Naive thymus-derived CD4-positive, alpha-beta T cell (primary cell): ENCODE measurements at regions of chr7 and their contacts with region 1.

Region 1: GRCh38 chr7:106009403-106010226 is 46.6 kb downstream of the CDHR3 start:
- DNase-seq: peak; percentile 73 to 85 (median 81)
- ATAC-seq: peak; percentile 99
- H3K4me3 ChIP-seq: no peak overlapping the region
- H3K4me3 Mint-ChIP-seq: peak overlapping the region in 9 of 10 donors; percentile 36 to 69 (median 55)
- H3K27ac ChIP-seq: no peak overlapping the region
- H3K27ac Mint-ChIP-seq: peak overlapping the region in 7 of 9 donors; percentile 38 to 93 (median 86)
- H3K4me1 ChIP-seq: peaks cover 0 to 30% of the 10 kb centered on the region in 2 donors
- H3K4me1 Mint-ChIP-seq: peaks cover 17 to 51% (median 45%) of the 10 kb centered on the region in 7 donors
- H3K27me3 ChIP-seq: no peaks in the 10 kb centered on the region
- H3K27me3 Mint-ChIP-seq: peaks cover 0 to 42% (median 0%) of the 10 kb centered on the region in 5 donors

Region 2: DNA sequence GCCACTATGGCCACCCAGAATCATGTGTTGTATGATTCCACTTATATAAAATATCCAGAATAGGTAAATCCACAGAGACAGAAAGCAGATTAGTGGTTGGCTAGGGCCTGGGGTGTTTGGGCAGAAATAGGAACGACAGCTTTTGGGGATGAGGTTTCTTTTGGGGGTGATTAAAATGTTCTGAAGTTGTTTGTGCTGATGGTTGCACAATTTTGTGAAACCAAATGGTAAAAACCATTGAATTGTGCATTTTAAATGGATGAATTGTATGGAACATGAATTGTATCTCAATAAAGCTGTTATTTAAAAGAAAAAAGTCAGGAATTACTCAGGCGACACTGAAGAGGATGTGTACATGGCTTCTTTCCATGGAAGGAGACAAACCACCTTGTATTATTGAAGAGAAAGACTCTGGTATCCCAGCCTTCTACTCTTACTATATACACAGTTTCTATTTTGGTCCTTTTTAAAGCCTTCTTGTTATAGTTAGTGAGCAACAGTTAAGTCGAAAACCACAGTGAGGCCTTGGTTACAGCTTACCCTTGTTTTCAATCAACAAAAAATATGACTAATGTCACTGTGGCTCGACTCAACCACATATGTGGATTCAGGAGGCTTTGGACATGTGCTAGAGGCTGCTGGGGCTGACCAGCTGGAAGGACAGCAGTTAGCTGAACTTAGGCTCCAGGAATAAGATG is 1052.7 kb before region 1 on chr7:
- CTCF ChIA-PET with region 1: no interaction called
- POLR2A ChIA-PET with region 1: no interaction called
- intact Hi-C with region 1: no loop called
- DNase-seq: peak in 1 of 9 donors; percentile 61
- ATAC-seq: peak; percentile 80
- H3K4me3 ChIP-seq: no peak overlapping the region
- H3K4me3 Mint-ChIP-seq: peak overlapping the region in 1 of 10 donors; percentile 59
- H3K27ac ChIP-seq: no peak overlapping the region
- H3K27ac Mint-ChIP-seq: peak overlapping the region in 5 of 9 donors; percentile 38 to 99 (median 60)
- H3K4me1 ChIP-seq: peaks cover 0 to 19% of the 10 kb centered on the region in 2 donors
- H3K4me1 Mint-ChIP-seq: peaks cover 4 to 61% (median 6%) of the 10 kb centered on the region in 7 donors
- H3K27me3 ChIP-seq: no peaks in the 10 kb centered on the region
- H3K27me3 Mint-ChIP-seq: no peaks in the 10 kb centered on the region

Region 3: DNA sequence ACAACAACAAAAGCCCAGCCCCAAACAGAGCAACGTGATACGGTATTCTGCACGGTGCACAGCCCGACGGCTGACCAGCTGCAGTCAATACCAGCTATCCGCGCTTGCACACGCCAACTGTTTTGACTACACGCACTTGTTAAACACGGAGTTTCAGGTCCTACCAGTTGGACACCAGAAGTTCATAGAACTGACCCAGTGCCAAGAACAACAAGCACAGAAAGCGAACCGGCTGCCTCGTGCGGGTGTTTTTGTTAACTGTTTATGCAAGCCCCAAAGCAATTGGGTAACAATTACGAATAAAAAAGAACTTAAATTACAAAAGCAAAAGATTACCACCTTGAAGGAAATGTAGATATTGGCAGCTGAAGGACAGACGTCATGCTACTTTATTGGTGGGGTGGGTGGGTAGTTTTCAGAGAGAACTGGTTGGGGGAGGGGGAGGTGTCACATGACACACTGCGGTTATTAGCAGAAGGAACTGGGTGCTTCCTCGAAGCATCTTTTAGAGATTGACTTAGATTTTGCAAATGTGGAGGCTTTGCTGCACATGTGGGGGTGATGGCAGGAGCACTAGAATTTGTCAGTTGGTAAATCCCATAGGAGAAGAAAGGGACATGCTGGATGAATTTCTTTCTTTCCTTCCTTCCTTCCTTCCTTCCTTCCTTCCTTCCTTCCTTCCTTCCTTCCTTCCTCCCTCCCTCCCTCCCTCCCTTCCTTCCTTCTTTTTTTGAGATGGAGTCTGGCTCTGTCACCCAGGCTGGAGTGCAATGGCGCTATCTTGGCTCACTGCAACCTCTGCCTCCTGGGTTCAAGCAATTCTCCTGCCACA is 317.7 kb before region 1 on chr7:
- CTCF ChIA-PET with region 1: no interaction called
- POLR2A ChIA-PET with region 1: no interaction called
- intact Hi-C with region 1: loop called in 1 of 2 experiments (anchors 1 kb)
- DNase-seq: peak; percentile 22 to 94 (median 90)
- ATAC-seq: peak; percentile 89
- H3K4me3 ChIP-seq: peak overlapping the region; percentile 94
- H3K4me3 Mint-ChIP-seq: peak overlapping the region; percentile 84 to 98 (median 92)
- H3K27ac ChIP-seq: peak overlapping the region; percentile 83
- H3K27ac Mint-ChIP-seq: peak overlapping the region; percentile 95 to 100 (median 99)
- H3K4me1 ChIP-seq: peaks cover 19 to 21% of the 10 kb centered on the region in 2 donors
- H3K4me1 Mint-ChIP-seq: peaks cover 33 to 78% (median 65%) of the 10 kb centered on the region in 7 donors
- H3K27me3 ChIP-seq: no peaks in the 10 kb centered on the region
- H3K27me3 Mint-ChIP-seq: no peaks in the 10 kb centered on the region

Region 4: GRCh38 chr7:105934572-105935185 is 74.9 kb before region 1 on chr7:
- CTCF ChIA-PET with region 1: no interaction called
- POLR2A ChIA-PET with region 1: no interaction called
- intact Hi-C with region 1: loop called in 1 of 2 experiments (anchors 2 kb)
- DNase-seq: peak in 3 of 9 donors; percentile 9 to 23 (median 10)
- ATAC-seq: no peak
- H3K4me3 ChIP-seq: no peak overlapping the region
- H3K4me3 Mint-ChIP-seq: no peak overlapping the region
- H3K27ac ChIP-seq: no peak overlapping the region
- H3K27ac Mint-ChIP-seq: peak overlapping the region in 3 of 9 donors; percentile 9 to 81 (median 10)
- H3K4me1 ChIP-seq: peaks cover 0 to 7% of the 10 kb centered on the region in 2 donors
- H3K4me1 Mint-ChIP-seq: peaks cover 0 to 33% (median 14%) of the 10 kb centered on the region in 7 donors
- H3K27me3 ChIP-seq: no peaks in the 10 kb centered on the region
- H3K27me3 Mint-ChIP-seq: peaks cover 0 to 36% (median 0%) of the 10 kb centered on the region in 5 donors

Region 5: DNA sequence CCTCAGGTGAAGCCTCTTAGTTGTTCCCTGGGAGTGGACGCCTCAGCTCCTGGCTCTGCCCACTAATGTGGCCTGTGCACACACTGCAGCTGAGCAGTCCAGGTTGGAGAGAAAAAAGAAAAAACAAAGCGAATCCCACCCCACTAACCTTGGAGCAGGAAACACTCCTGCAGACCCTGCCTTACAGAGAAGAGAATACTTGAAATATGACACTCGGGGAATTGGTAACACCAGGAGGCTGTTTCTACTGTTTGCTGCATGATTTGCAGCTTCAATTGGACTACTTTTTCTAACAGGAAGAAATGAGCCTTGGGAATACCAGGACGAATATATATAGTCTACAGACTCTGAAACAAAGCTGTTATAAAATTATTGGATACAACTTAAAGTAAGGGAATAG is 24.4 kb before region 1 on chr7:
- CTCF ChIA-PET with region 1: no interaction called
- POLR2A ChIA-PET with region 1: no interaction called
- intact Hi-C with region 1: no loop called
- DNase-seq: no peak
- ATAC-seq: no peak
- H3K4me3 ChIP-seq: no peak overlapping the region
- H3K4me3 Mint-ChIP-seq: no peak overlapping the region
- H3K27ac ChIP-seq: no peak overlapping the region
- H3K27ac Mint-ChIP-seq: peak overlapping the region in 1 of 9 donors; percentile 31
- H3K4me1 ChIP-seq: no peaks in the 10 kb centered on the region
- H3K4me1 Mint-ChIP-seq: peaks cover 0 to 18% (median 6%) of the 10 kb centered on the region in 7 donors
- H3K27me3 ChIP-seq: no peaks in the 10 kb centered on the region
- H3K27me3 Mint-ChIP-seq: peaks cover 0 to 46% (median 6%) of the 10 kb centered on the region in 5 donors